CD8-positive, alpha-beta memory T cell (primary cell): ENCODE measurements at regions of chrX and their contacts with region 1.

Region 1: DNA sequence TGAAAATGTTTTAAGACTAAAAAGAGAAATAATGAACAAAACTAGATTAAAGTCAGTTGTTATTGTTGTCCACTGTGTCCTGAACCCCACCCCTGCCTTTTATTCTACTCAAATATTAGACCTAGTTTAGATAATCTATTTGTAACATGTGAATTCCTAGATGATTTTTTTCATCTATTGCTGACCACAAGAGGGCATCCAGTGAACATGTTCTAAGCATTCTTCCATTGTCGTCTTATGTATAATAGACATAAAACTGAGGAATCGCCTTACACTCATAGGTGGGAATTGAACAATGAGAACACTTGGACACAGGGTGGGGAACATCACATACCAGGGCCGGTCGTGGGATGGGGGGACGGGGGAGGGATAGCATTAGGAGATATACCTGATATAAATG is 36.4 kb upstream of the HPRT1 start:
- DNase-seq: no peak
- H3K4me3 ChIP-seq: no peak overlapping the region
- H3K4me3 Mint-ChIP-seq: no peak overlapping the region
- H3K27ac ChIP-seq: no peak overlapping the region
- H3K27ac Mint-ChIP-seq: no peak overlapping the region
- H3K4me1 ChIP-seq: no peaks in the 10 kb centered on the region
- H3K4me1 Mint-ChIP-seq: no peaks in the 10 kb centered on the region
- H3K27me3 ChIP-seq: no peaks in the 10 kb centered on the region
- H3K27me3 Mint-ChIP-seq: peaks cover 0 to 5% of the 10 kb centered on the region in 2 donors

Region 2: DNA sequence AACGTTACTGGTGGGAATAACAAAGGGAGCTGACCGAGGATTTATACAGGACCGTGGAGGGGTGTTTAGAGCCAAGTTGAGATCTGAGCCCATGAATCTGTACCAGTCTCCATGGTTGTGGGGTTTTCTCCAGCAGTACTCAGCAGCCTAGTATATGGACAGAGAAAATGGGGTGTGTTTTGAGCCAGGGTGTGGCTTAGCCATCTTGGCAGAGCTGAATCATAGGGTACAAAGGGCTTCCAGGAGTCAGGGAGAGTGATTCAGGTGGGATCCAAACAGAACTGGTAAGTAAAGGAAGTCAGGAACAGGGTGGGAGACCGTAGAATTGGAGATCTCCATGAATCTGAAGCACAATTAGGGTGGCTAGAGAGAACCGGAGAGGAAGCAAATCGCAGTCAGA is 29.0 kb after region 1 on chrX:
- CTCF ChIA-PET with region 1: no interaction called
- POLR2A ChIA-PET with region 1: interaction called, 15 read pairs
- DNase-seq: no peak
- H3K4me3 ChIP-seq: no peak overlapping the region
- H3K4me3 Mint-ChIP-seq: no peak overlapping the region
- H3K27ac ChIP-seq: no peak overlapping the region
- H3K27ac Mint-ChIP-seq: peak overlapping the region in 1 of 8 donors; percentile 21
- H3K4me1 ChIP-seq: no peaks in the 10 kb centered on the region
- H3K4me1 Mint-ChIP-seq: no peaks in the 10 kb centered on the region
- H3K27me3 ChIP-seq: no peaks in the 10 kb centered on the region
- H3K27me3 Mint-ChIP-seq: peaks cover 0 to 6% of the 10 kb centered on the region in 2 donors